ENCODE measurements at regions of chrX and their contacts with region 1.

Region 1: GRCh38 chrX:37926700-37927099 is 79.3 kb upstream of the DYNLT3 start:
- DNase-seq: peak in 4 of 9 donors; percentile 2 to 24 (median 8)
- ATAC-seq: peak; percentile 45
- H3K4me3 ChIP-seq: no peak overlapping the region
- H3K4me3 Mint-ChIP-seq: no peak overlapping the region
- H3K27ac ChIP-seq: no peak overlapping the region
- H3K27ac Mint-ChIP-seq: no peak overlapping the region
- H3K4me1 ChIP-seq: no peaks in the 10 kb centered on the region
- H3K4me1 Mint-ChIP-seq: peaks cover 0 to 3% (median 0%) of the 10 kb centered on the region in 7 donors
- H3K27me3 ChIP-seq: no peaks in the 10 kb centered on the region
- H3K27me3 Mint-ChIP-seq: peaks cover 0 to 12% (median 6%) of the 10 kb centered on the region in 5 donors

Region 2: GRCh38 chrX:37491686-37492085 is 435.0 kb before region 1 on chrX:
- CTCF ChIA-PET with region 1: no interaction called
- POLR2A ChIA-PET with region 1: no interaction called
- intact Hi-C with region 1: no loop called
- DNase-seq: no peak
- ATAC-seq: no peak
- H3K4me3 ChIP-seq: no peak overlapping the region
- H3K4me3 Mint-ChIP-seq: no peak overlapping the region
- H3K27ac ChIP-seq: no peak overlapping the region
- H3K27ac Mint-ChIP-seq: no peak overlapping the region
- H3K4me1 ChIP-seq: no peaks in the 10 kb centered on the region
- H3K4me1 Mint-ChIP-seq: no peaks in the 10 kb centered on the region
- H3K27me3 ChIP-seq: no peaks in the 10 kb centered on the region
- H3K27me3 Mint-ChIP-seq: peaks cover 0 to 3% (median 0%) of the 10 kb centered on the region in 5 donors

Region 3: GRCh38 chrX:37905436-37906147 is 21.1 kb before region 1 on chrX:
- CTCF ChIA-PET with region 1: no interaction called
- POLR2A ChIA-PET with region 1: no interaction called
- intact Hi-C with region 1: no loop called
- DNase-seq: no peak
- ATAC-seq: no peak
- H3K4me3 ChIP-seq: no peak overlapping the region
- H3K4me3 Mint-ChIP-seq: peak overlapping the region in 6 of 10 donors; percentile 7 to 57 (median 40)
- H3K27ac ChIP-seq: no peak overlapping the region
- H3K27ac Mint-ChIP-seq: no peak overlapping the region
- H3K4me1 ChIP-seq: no peaks in the 10 kb centered on the region
- H3K4me1 Mint-ChIP-seq: peaks cover 0 to 6% (median 0%) of the 10 kb centered on the region in 7 donors
- H3K27me3 ChIP-seq: peaks cover 0 to 3% of the 10 kb centered on the region in 2 donors
- H3K27me3 Mint-ChIP-seq: peaks cover 17 to 32% (median 25%) of the 10 kb centered on the region in 5 donors

Region 4: DNA sequence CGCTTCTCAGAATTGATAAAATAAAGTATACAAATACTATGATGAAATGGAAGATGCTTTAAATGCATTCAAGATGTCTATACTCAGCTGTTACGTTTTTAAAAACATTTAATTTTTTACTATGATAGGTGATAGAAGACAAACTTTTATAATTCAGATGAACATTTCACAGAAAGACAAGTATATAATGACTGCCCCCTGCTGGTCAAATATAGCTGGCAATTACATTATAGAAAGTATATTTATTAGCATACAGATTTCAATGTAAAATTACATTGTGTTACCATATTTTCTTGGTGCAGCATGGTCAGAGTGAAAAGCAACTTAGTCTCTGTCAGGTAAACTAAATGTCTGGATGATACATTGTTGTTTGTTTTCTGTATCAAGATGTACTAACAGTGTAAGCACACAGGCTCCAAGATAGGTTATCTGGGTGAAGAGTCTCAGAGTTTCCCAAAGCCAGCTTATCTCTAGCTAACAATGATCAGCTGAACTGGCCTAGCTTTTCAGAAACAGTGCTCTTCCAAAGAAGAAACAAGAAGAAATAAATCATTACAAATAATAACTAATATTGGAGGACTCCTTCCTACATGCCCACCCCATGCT is 239.9 kb after region 1 on chrX:
- CTCF ChIA-PET with region 1: no interaction called
- POLR2A ChIA-PET with region 1: no interaction called
- intact Hi-C with region 1: loop called in 1 of 2 experiments (anchors 1 kb)
- DNase-seq: peak in 4 of 9 donors; percentile 7 to 17 (median 12)
- ATAC-seq: no peak
- H3K4me3 ChIP-seq: no peak overlapping the region
- H3K4me3 Mint-ChIP-seq: no peak overlapping the region
- H3K27ac ChIP-seq: no peak overlapping the region
- H3K27ac Mint-ChIP-seq: no peak overlapping the region
- H3K4me1 ChIP-seq: no peaks in the 10 kb centered on the region
- H3K4me1 Mint-ChIP-seq: no peaks in the 10 kb centered on the region
- H3K27me3 ChIP-seq: no peaks in the 10 kb centered on the region
- H3K27me3 Mint-ChIP-seq: peaks cover 0 to 4% (median 0%) of the 10 kb centered on the region in 5 donors

Region 5: GRCh38 chrX:38175140-38175539 is 248.4 kb after region 1 on chrX:
- CTCF ChIA-PET with region 1: no interaction called
- POLR2A ChIA-PET with region 1: no interaction called
- intact Hi-C with region 1: loop called in 1 of 2 experiments (anchors 2 kb)
- DNase-seq: no peak
- ATAC-seq: no peak
- H3K4me3 ChIP-seq: no peak overlapping the region
- H3K4me3 Mint-ChIP-seq: no peak overlapping the region
- H3K27ac ChIP-seq: no peak overlapping the region
- H3K27ac Mint-ChIP-seq: no peak overlapping the region
- H3K4me1 ChIP-seq: no peaks in the 10 kb centered on the region
- H3K4me1 Mint-ChIP-seq: no peaks in the 10 kb centered on the region
- H3K27me3 ChIP-seq: no peaks in the 10 kb centered on the region
- H3K27me3 Mint-ChIP-seq: peaks cover 0 to 8% (median 0%) of the 10 kb centered on the region in 5 donors

Region 6: DNA sequence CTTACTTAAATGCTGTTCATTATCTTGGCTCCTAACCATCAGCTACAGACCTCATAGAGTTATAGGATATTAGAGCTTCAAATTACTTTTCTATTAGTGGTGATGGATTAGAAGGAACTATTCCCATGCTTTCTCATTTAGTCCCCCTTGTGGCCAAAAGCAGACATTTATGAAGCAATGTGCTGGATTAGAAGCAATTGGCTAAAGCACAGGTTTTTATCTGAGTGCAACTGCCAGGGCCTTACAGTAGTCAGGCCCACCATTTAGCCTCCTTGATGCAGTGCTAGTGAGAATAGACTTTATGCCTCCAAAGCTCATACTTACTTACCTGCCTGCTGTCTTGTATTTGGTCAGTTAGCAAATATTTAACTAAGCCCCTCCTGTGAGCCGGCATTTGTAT is 727.6 kb after region 1 on chrX:
- CTCF ChIA-PET with region 1: no interaction called
- POLR2A ChIA-PET with region 1: no interaction called
- intact Hi-C with region 1: loop called in 1 of 2 experiments (anchors 5 kb)
- DNase-seq: no peak
- ATAC-seq: no peak
- H3K4me3 ChIP-seq: no peak overlapping the region
- H3K4me3 Mint-ChIP-seq: no peak overlapping the region
- H3K27ac ChIP-seq: no peak overlapping the region
- H3K27ac Mint-ChIP-seq: no peak overlapping the region
- H3K4me1 ChIP-seq: no peaks in the 10 kb centered on the region
- H3K4me1 Mint-ChIP-seq: peaks cover 0 to 2% (median 0%) of the 10 kb centered on the region in 7 donors
- H3K27me3 ChIP-seq: no peaks in the 10 kb centered on the region
- H3K27me3 Mint-ChIP-seq: no peaks in the 10 kb centered on the region